Colonic mucosa (tissue), 4 donors: ENCODE measurements at regions of chr11 and their contacts with region 1.

Region 1: GRCh38 chr11:2208691-2209369 is 37.2 kb upstream of the TH start:
- DNase-seq: peak; percentile 27
- H3K4me3 ChIP-seq: no peak overlapping the region
- H3K27ac ChIP-seq: no peak overlapping the region
- H3K4me1 ChIP-seq: peaks cover 3% of the 10 kb centered on the region
- H3K27me3 ChIP-seq: no peaks in the 10 kb centered on the region
- CTCF ChIP-seq: no peak

Region 2: GRCh38 chr11:1298695-1299492 is 909.9 kb before region 1 on chr11:
- intact Hi-C with region 1: no loop called
- DNase-seq: peak; percentile 88
- H3K4me3 ChIP-seq: no peak overlapping the region
- H3K27ac ChIP-seq: no peak overlapping the region
- H3K4me1 ChIP-seq: peaks cover 23% of the 10 kb centered on the region
- H3K27me3 ChIP-seq: no peaks in the 10 kb centered on the region
- CTCF ChIP-seq: no peak

Region 3: DNA sequence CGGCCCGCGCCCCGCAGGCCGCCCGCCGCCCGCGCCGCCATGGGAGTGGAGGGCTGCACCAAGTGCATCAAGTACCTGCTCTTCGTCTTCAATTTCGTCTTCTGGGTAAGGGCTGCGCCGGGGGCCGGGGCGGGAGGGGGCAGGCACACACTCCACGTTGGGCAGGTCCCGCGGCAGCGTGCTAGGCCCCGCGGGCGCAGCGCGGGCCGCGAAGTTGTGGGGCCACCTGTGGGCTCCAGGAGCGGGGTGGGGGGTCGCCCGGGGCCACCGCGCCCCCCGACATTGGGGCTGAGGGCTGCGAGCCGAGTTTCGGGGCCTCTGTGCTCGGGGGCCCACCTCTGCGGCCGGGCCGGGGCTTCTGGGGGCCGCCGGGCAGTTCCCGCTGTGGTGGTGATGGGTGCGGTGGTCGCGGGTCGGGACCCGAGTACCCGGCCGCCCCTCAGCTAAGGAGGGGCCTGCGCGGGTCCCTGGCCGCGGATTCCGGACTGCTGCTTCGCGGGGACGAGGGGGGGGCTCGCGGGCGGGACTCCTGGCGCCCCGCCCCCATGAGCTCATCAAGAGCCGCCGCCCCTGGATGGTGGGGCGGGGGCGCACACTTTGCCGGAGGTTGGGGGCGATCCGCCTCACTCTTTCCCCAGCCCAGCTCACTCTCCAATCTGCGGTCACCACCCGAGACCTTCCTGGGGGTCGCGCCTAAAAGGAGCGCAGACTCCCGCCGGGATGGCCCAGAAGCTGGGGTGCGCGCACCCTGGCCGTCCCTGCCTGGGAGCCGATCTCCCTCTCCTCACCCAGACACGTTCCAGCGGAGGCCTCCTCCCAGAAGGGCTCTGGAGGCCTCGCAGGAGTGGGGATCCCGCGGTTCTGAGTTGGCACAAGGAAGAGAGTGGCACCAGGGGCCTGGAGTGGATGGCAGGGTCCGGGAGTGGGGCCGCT is 168.9 kb after region 1 on chr11:
- intact Hi-C with region 1: no loop called
- DNase-seq: peak; percentile 63
- H3K4me3 ChIP-seq: peak overlapping the region; percentile 97
- H3K27ac ChIP-seq: peak overlapping the region; percentile 86
- H3K4me1 ChIP-seq: peaks cover 25% of the 10 kb centered on the region
- H3K27me3 ChIP-seq: no peaks in the 10 kb centered on the region
- CTCF ChIP-seq: no peak

Region 4: DNA sequence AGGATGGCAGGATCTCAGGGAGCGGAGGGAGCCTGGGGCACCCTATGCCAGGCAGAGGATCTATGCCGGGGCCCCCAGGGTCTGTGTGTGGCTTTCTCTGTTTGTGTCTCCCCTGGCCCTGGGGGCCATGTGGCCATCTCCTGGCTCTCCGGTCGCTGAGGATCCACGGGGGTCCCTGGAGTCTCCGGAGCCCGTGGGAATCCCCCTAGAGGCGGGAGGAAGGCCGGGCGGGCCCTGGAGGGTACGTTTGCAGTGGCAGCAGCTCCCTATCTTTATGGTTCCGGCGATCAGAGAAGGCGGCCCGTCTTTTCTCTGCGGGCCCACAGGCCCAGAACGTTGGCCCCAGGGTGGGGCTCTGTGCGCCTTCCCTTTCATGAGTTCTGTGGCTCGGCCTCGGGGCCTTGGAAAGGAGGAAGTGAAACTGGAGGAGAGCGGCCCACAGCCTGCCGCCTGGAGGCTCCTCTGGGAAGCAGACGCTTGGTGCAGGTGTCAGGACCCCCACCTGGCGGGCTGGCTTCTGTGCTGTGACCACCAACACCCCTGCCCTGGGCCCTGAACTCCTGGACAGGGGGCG is 318.1 kb after region 1 on chr11:
- intact Hi-C with region 1: loop called (anchors 10 kb)
- DNase-seq: peak; percentile 87
- H3K4me3 ChIP-seq: no peak overlapping the region
- H3K27ac ChIP-seq: peak overlapping the region; percentile 72
- H3K4me1 ChIP-seq: peaks cover 7% of the 10 kb centered on the region
- H3K27me3 ChIP-seq: no peaks in the 10 kb centered on the region
- CTCF ChIP-seq: peak; percentile 38